GM12878 (cell line): ENCODE measurements at regions of chrX and their contacts with region 1.

Region 1: DNA sequence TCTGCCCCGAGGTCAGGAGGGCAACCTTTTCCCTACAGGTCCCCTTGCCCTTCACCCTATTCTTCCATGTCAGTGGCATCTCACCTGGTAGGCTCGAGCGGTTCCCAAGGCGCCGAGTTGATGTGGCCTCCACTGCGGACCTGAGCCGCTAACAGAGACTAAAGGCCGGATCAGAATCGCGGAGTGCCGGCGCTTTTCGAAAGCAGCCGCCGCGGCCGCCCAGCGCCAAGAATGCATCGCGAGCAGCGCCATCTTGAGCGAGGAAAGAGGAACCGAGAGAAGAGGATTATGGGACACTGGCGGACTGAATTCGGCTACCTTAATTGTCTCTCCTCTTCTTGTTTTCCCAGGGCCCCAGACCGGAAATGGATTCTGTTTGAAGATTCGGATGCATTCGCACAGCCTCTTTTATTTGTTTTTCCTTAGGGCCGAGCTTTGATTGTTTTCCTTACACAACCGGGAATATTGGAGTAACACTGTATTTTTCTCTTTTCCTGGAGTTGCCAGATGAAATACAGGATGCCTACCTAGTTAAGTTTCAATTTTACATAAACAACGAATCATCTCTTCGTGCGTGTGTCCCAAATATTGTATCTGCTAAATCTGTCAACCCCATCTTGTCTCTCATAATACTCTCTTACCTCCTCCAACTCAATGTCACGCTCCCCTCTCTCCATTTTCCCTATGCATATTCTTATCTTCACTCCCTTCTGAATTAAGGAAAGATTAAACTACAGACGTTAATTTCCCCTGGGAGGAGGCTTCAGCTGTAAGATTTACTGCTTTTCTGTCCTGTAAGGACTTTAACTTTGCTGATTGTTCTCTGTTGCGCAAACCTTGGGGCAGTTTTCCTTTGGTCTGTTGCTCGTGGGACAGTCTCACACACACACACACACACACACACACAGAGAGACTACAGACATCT is at the start of gene ABCB7:
- DNase-seq: peak; percentile 34
- ATAC-seq: peak; percentile 89
- H3K4me3 ChIP-seq: peak within 1 kb of the TSS; percentile 74
- H3K27ac ChIP-seq: peak within 1 kb of the TSS; percentile 74
- H3K4me1 ChIP-seq: no peaks in the 10 kb centered on the region; the same call in 1 of the 2 replicates
- H3K27me3 ChIP-seq: no peaks in the 10 kb centered on the region
- CTCF ChIP-seq: 0 out of 6 replicates have a peak, but pooled peaks of 1 of the 3 experiments have one; percentile 4
- EP300 ChIP-seq: no peak
- POLR2A ChIP-seq: peak; percentile 84
- RAD21 ChIP-seq: no peak
- polyA plus RNA-seq, gene ABCB7: 31.1 to 34.6 TPM

Region 2: DNA sequence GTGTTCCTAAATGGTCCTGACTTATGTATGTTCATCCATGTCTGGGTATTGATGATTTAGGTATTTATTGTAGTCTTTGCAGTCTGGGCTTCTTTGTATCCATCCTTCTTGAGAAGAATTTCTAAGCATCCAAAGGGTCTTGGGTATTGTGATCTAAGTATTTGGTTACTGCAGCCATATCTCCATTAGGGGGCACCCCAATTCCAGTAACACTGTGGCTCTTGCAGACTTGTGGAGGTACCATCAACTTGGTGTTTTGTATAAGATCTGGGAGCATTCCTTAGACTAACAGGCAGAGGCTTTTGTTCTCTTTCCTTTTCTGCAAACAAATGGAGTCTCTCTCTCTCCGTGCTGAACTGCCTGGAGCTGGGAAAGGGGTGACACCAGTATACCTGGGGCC is 117.4 kb before region 1 on chrX:
- CTCF ChIA-PET with region 1: no interaction called
- POLR2A ChIA-PET with region 1: no interaction called
- RAD21 ChIA-PET with region 1: no interaction called
- SMC1A ChIA-PET with region 1: no interaction called
- in situ Hi-C with region 1: no loop called
- intact Hi-C with region 1: no loop called
- DNase-seq: peak; percentile 11
- ATAC-seq: peak; percentile 83
- H3K4me3 ChIP-seq: no peak overlapping the region
- H3K27ac ChIP-seq: no peak overlapping the region
- H3K4me1 ChIP-seq: no peaks in the 10 kb centered on the region
- H3K27me3 ChIP-seq: no peaks in the 10 kb centered on the region
- CTCF ChIP-seq: peak; percentile 40 to 57 (median 42); a peak in 5 of 6 replicates
- EP300 ChIP-seq: no peak
- POLR2A ChIP-seq: no peak
- RAD21 ChIP-seq: peak; percentile 63

Region 3: GRCh38 chrX:75210602-75211001 is 54.3 kb after region 1 on chrX:
- CTCF ChIA-PET with region 1: no interaction called
- POLR2A ChIA-PET with region 1: no interaction called
- RAD21 ChIA-PET with region 1: no interaction called
- SMC1A ChIA-PET with region 1: no interaction called
- in situ Hi-C with region 1: no loop called
- intact Hi-C with region 1: no loop called
- DNase-seq: no peak
- ATAC-seq: no peak
- H3K4me3 ChIP-seq: no peak overlapping the region
- H3K27ac ChIP-seq: no peak overlapping the region
- H3K4me1 ChIP-seq: no peaks in the 10 kb centered on the region
- H3K27me3 ChIP-seq: no peaks in the 10 kb centered on the region
- CTCF ChIP-seq: no peak
- EP300 ChIP-seq: no peak
- POLR2A ChIP-seq: no peak
- RAD21 ChIP-seq: no peak

Region 4: GRCh38 chrX:75273483-75273882 is 117.2 kb after region 1 on chrX:
- CTCF ChIA-PET with region 1: interaction called, 3 read pairs
- POLR2A ChIA-PET with region 1: no interaction called
- RAD21 ChIA-PET with region 1: interaction called, 3 read pairs
- SMC1A ChIA-PET with region 1: interaction called, 3 read pairs
- in situ Hi-C with region 1: no loop called
- intact Hi-C with region 1: loop called (anchors 5 kb)
- DNase-seq: no peak
- ATAC-seq: peak; percentile 7; the same call in 2 of the 3 replicates
- H3K4me3 ChIP-seq: peak overlapping the region; percentile 70
- H3K27ac ChIP-seq: peak overlapping the region; percentile 81
- H3K4me1 ChIP-seq: no peaks in the 10 kb centered on the region
- H3K27me3 ChIP-seq: no peaks in the 10 kb centered on the region
- CTCF ChIP-seq: no peak
- EP300 ChIP-seq: no peak
- POLR2A ChIP-seq: no peak
- RAD21 ChIP-seq: no peak